Tibial artery (tissue), 4 donors: ENCODE measurements at regions of chr3 and their contacts with region 1.

Region 1: DNA sequence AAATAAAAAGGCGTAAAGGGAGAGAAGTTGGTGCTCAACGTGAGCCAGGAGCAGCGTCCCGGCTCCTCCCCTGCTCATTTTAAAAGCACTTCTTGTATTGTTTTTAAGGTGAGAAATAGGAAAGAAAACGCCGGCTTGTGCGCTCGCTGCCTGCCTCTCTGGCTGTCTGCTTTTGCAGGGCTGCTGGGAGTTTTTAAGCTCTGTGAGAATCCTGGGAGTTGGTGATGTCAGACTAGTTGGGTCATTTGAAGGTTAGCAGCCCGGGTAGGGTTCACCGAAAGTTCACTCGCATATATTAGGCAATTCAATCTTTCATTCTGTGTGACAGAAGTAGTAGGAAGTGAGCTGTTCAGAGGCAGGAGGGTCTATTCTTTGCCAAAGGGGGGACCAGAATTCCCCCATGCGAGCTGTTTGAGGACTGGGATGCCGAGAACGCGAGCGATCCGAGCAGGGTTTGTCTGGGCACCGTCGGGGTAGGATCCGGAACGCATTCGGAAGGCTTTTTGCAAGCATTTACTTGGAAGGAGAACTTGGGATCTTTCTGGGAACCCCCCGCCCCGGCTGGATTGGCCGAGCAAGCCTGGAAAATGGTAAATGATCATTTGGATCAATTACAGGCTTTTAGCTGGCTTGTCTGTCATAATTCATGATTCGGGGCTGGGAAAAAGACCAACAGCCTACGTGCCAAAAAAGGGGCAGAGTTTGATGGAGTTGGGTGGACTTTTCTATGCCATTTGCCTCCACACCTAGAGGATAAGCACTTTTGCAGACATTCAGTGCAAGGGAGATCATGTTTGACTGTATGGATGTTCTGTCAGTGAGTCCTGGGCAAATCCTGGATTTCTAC is at the start of gene RARB:
- DNase-seq: peak; percentile 76 to 85
- H3K4me3 ChIP-seq: peak within 1 kb of the TSS; percentile 66 to 78
- H3K27ac ChIP-seq: peak within 1 kb of the TSS; percentile 79 to 85
- H3K4me1 ChIP-seq: peaks cover 0 to 37% (median 5%) of the 10 kb centered on the region in 4 donors
- H3K27me3 ChIP-seq: no peaks in the 10 kb centered on the region
- CTCF ChIP-seq: no peak

Region 2: GRCh38 chr3:25338152-25338725 is 89.9 kb before region 1 on chr3:
- intact Hi-C with region 1: no loop called
- DNase-seq: no peak
- H3K4me3 ChIP-seq: no peak overlapping the region
- H3K27ac ChIP-seq: no peak overlapping the region
- H3K4me1 ChIP-seq: peaks cover 0 to 12% (median 3%) of the 10 kb centered on the region in 4 donors
- H3K27me3 ChIP-seq: no peaks in the 10 kb centered on the region
- CTCF ChIP-seq: no peak

Region 3: GRCh38 chr3:25594007-25594502 is 165.9 kb after region 1 on chr3:
- intact Hi-C with region 1: loop called (anchors 5 kb)
- DNase-seq: no peak
- H3K4me3 ChIP-seq: no peak overlapping the region
- H3K27ac ChIP-seq: peak overlapping the region; percentile 13 to 62
- H3K4me1 ChIP-seq: peaks cover 0 to 34% (median 27%) of the 10 kb centered on the region in 4 donors
- H3K27me3 ChIP-seq: no peaks in the 10 kb centered on the region
- CTCF ChIP-seq: peak; percentile 82 to 85

Region 4: GRCh38 chr3:25945836-25946235 is 517.7 kb after region 1 on chr3:
- intact Hi-C with region 1: no loop called
- DNase-seq: no peak
- H3K4me3 ChIP-seq: no peak overlapping the region
- H3K27ac ChIP-seq: no peak overlapping the region
- H3K4me1 ChIP-seq: no peaks in the 10 kb centered on the region
- H3K27me3 ChIP-seq: no peaks in the 10 kb centered on the region
- CTCF ChIP-seq: no peak